ENCODE measurements at regions of chr7 and their contacts with region 1.

Region 1: DNA sequence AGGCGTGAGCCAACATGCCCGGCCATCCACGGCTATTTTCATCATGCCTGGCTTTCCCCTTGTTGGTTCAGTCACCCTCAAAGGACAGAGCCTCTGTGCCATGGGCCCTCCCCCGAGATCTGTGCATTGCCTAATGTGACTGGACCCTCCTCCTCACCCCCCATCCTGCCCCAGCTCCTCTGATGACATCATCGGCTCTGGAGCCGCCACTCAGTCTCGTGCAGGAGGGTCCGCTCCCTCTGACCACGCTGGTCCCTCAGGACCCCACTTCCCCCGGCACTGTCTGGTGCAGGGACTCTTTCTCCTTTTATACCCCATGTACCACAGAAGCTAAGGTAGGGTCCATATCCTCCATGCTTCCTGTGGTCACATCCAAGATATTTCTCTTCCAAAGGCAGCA is 33.2 kb upstream of the BAIAP2L1 start:
- DNase-seq: no peak
- ATAC-seq: no peak
- H3K4me3 ChIP-seq: no peak overlapping the region
- H3K27ac ChIP-seq: no peak overlapping the region
- H3K4me1 ChIP-seq: no peaks in the 10 kb centered on the region; a peak in 1 of 5 replicates
- H3K27me3 ChIP-seq: peaks cover 3 to 36% of the 10 kb centered on the region in 2 experiments; a peak in 3 of 5 replicates
- CTCF ChIP-seq: no peak
- EP300 ChIP-seq: no peak
- POLR2A ChIP-seq: no peak
- RAD21 ChIP-seq: no peak

Region 2: DNA sequence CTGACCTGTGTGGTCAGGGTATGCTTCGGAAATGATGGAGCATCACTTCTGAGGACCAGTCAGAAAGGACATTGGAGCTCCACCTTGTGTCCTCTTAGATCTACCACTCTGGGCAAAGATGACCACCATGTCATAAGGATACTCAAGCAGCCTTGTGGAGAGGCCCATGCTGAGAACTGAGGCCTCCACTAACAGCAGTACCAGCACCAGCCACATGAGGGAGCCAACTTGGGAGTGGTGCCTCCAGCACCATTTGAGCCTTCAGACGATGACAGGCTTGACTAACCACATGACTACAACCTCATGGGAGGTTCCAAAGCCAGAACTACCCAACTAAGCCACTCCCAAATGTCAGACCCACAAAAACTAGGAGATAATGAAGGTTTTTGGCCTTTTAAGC is 298.9 kb after region 1 on chr7:
- CTCF ChIA-PET with region 1: no interaction called
- POLR2A ChIA-PET with region 1: interaction called, 4 read pairs
- in situ Hi-C with region 1: no loop called
- intact Hi-C with region 1: loop called (anchors 5 kb)
- DNase-seq: peak; percentile 81 to 91 (median 86)
- ATAC-seq: peak; percentile 98
- H3K4me3 ChIP-seq: no peak overlapping the region
- H3K27ac ChIP-seq: no peak overlapping the region
- H3K4me1 ChIP-seq: no peaks in the 10 kb centered on the region
- H3K27me3 ChIP-seq: peaks cover 3 to 35% of the 10 kb centered on the region in 2 experiments; a peak in 4 of 5 replicates
- CTCF ChIP-seq: peak; percentile 77 to 93 (median 85)
- EP300 ChIP-seq: no peak
- POLR2A ChIP-seq: no peak
- RAD21 ChIP-seq: peak in 1 of 2 experiments; percentile 63; a peak in 2 of 4 replicates

Region 3: DNA sequence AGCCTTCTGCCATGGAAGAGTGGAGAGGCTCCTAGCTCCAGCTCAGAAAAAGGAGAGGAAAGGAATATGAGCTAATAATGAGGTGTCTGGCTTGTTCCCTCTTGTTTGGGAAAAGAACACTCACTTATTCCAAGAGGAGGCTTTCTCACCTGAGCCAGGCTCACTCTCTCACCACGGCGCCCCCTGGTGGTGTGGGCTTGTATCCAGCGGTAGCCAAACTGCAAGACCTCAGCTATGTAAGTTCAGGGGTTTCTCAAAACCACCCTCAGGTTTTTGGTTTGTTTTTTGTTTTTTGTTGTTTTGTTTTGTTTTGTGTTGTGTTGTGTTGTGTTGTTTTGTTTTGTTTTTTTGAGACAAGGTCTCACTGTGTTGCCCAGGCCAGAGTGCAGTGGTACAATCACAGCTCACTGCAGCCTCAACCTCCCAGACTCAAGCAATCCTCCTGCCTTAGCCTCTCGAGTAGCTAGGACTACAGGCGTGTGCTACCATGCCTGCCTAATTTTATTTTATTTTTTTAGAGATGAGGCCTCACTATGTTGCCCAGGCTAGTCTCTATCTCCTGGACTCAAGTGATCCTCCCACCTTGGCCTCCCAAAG is 311.7 kb after region 1 on chr7:
- CTCF ChIA-PET with region 1: interaction called, 16 read pairs
- POLR2A ChIA-PET with region 1: no interaction called
- in situ Hi-C with region 1: loop called (anchors 5 kb)
- intact Hi-C with region 1: loop called (anchors 1 kb)
- DNase-seq: peak; percentile 78 to 88 (median 86)
- ATAC-seq: peak; percentile 96
- H3K4me3 ChIP-seq: no peak overlapping the region
- H3K27ac ChIP-seq: no peak overlapping the region
- H3K4me1 ChIP-seq: no peaks in the 10 kb centered on the region
- H3K27me3 ChIP-seq: peaks cover 16 to 39% of the 10 kb centered on the region in 2 experiments; a peak in 4 of 5 replicates
- CTCF ChIP-seq: peak; percentile 82 to 90 (median 89)
- EP300 ChIP-seq: no peak
- POLR2A ChIP-seq: no peak
- RAD21 ChIP-seq: peak; percentile 54 to 71

Measured in K562 (cell line).